ENCODE measurements at regions of chr3 and their contacts with region 1.

Region 1: GRCh38 chr3:169966428-169966950 is at the start of gene SEC62:
- DNase-seq: peak; percentile 89 to 97 (median 94)
- H3K4me3 ChIP-seq: peak within 1 kb of the TSS; percentile 60 to 98 (median 88)
- H3K27ac ChIP-seq: peak within 1 kb of the TSS; percentile 34 to 97 (median 91)
- H3K27me3 ChIP-seq: no peaks in the 10 kb centered on the region
- CTCF ChIP-seq: peak in 54 of 56 donors; percentile 17 to 74 (median 53)
- total RNA-seq, gene SEC62: 130 to 256 (median 198) TPM

Region 2: DNA sequence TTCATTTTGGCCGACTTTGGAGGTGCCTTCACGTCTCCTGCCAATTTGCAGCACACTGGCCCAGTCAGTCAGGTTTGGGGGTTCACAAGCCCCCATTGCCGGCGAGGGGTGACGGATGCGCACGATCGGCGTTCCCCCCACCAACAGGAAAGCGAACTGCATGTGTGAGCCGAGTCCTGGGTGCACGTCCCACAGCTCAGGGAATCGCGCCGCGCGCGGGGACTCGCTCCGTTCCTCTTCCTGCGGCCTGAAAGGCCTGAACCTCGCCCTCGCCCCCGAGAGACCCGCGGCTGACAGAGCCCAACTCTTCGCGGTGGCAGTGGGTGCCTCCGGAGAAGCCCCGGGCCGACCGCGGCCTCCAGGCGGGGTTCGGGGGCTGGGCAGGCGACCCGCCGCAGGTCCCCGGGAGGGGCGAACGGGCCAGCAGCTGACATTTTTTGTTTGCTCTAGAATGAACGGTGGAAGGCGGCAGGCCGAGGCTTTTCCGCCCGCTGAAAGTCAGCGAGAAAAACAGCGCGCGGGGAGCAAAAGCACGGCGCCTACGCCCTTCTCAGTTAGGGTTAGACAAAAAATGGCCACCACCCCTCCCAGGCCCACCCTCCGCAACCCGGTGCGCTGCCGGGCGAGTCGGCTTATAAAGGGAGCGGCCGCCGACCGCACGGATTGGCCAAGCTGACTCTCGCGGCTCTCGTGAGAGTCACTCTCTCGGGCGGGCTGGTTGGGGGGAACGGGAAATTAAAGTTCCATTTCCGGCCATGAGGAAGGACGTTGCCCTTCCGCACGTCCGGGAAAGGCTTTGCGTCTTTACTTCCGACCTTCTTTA is 201.8 kb before region 1 on chr3 and contains the start of gene TERC:
- intact Hi-C with region 1: loop called in 1 of 2 experiments (anchors 5 kb)
- DNase-seq: peak; percentile 81 to 96 (median 91)
- H3K4me3 ChIP-seq: peak within 1 kb of the TSS; percentile 63 to 98 (median 89)
- H3K27ac ChIP-seq: peak within 1 kb of the TSS; percentile 86 to 100 (median 97)
- H3K27me3 ChIP-seq: no peaks in the 10 kb centered on the region
- CTCF ChIP-seq: peak in 14 of 56 donors; percentile 4 to 28 (median 12)
- total RNA-seq, gene TERC: 1.6 to 15.3 (median 4.5) TPM in 78 of 120 experiments, not detected in the others

Region 3: DNA sequence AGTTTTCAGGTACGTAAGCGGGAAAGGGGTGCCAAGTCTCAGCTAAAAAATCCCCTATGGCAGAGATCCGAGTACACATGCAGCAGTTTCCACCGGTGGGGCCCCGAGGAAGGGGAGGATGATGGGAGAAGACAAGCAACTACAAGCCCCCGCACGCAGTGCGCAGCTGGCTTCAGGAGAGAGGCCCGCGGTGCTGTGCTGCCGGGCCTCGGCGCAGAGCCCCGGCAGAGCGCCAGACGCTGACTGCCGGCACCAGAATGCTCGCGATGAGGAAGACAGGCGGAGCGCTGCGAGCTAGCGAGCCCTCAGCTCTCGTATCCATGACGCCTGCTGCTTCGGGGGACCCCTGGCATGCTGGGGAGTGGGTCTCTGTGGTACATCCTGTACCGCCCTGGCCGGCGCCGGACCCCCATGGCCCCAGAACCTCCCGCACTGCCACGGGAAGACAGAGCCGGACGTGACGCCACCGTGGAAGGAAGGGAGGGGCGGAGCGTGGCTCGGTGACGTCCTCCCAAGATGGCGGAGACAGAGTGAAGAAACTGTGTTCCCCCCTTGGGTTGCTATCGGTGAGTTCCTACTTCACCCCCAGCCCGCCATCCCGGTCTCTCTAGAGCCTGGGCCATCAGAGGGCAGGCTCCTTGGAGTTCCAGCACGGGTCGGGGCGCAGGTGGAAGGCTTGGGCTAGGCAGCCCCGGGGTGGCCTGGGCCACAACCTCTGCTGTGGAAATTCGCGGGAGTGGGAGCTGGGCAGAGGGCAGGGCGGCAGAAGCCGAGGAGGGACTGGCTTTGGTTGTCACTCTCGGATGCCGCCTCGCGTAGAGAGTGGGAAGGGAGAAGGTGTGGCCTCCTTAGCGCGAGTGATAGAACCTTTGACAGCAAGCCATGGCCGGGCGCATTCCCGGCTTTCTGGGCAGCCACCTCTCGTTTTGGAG is 193.3 kb before region 1 on chr3 and contains the start of gene MYNN:
- intact Hi-C with region 1: loop called (anchors 2 to 5 kb)
- DNase-seq: peak; percentile 91 to 96 (median 94)
- H3K4me3 ChIP-seq: peak within 1 kb of the TSS; percentile 71 to 100 (median 92)
- H3K27ac ChIP-seq: peak within 1 kb of the TSS; percentile 91 to 100 (median 99)
- H3K27me3 ChIP-seq: no peaks in the 10 kb centered on the region
- CTCF ChIP-seq: peak in 11 of 56 donors; percentile 6 to 27 (median 18)
- total RNA-seq, gene MYNN: 9.5 to 20.4 (median 13.4) TPM

Region 4: GRCh38 chr3:169812332-169813235 is 153.9 kb before region 1 on chr3 and contains the starts of genes LRRC34 and LRRIQ4:
- intact Hi-C with region 1: loop called (anchors 2 to 5 kb)
- DNase-seq: peak; percentile 38 to 86 (median 75)
- H3K4me3 ChIP-seq: peak within 1 kb of the TSS; percentile 52 to 87 (median 73)
- H3K27ac ChIP-seq: peak within 1 kb of the TSS in 57 of 59 donors; percentile 10 to 90 (median 78)
- H3K27me3 ChIP-seq: no peaks in the 10 kb centered on the region
- CTCF ChIP-seq: peak in 1 of 56 donors; percentile 13
- total RNA-seq, gene LRRC34: 4.9 to 20.1 (median 11.4) TPM
- total RNA-seq, gene LRRIQ4: 0.23 to 1.8 (median 0.58) TPM in 100 of 120 experiments, not detected in the others

Region 5: DNA sequence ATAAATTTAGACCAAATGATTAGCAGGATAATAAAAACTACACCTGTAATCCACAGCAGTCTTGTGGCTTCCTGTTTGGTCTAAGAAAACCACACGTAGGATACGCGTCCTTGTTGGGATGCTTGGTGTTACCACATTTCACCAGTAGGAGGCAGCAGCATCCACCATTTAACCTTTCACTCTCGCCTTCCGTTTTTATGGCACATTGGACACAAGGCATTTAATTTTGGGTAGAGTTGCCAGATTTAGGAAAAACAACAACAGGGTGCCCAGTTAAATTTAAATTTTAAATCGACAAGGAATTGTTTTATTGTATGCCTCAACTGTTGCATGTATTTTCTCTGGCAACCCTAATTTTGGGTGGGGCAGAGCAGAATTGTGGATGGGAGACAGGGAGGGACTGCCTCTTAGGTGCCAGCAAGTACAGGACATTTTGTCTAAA is 103.0 kb before region 1 on chr3:
- intact Hi-C with region 1: loop called (anchors 1 to 10 kb)
- DNase-seq: peak in 6 of 10 donors; percentile 19 to 77 (median 68)
- H3K4me3 ChIP-seq: peak overlapping the region in 6 of 59 donors; percentile 1 to 45 (median 14)
- H3K27ac ChIP-seq: no peak overlapping the region
- H3K27me3 ChIP-seq: no peaks in the 10 kb centered on the region
- CTCF ChIP-seq: peak; percentile 81 to 97 (median 94)

Region 6: DNA sequence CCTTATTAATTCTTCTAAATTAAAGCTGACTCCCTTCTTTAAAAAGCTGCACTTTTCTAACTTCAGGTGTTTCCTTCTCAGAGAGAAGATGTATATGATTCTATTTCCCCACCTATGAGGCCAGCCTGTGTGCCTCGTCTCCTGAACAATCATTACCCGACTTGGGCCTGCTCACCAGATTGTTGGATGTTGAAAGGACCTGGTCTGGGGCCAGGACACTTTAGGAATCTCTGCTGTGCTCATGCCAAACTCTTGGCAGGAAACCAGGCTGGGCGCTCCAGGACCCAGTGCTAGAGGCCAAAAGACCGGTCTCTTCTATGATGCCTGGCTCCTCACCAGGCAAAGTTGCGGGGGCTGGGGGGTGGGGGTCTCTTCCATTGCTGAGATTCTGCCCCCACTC is 79.8 kb before region 1 on chr3:
- intact Hi-C with region 1: loop called in 1 of 2 experiments (anchors 2 kb)
- DNase-seq: peak in 8 of 10 donors; percentile 42 to 73 (median 58)
- H3K4me3 ChIP-seq: peak overlapping the region in 15 of 59 donors; percentile 3 to 46 (median 21)
- H3K27ac ChIP-seq: peak overlapping the region in 50 of 59 donors; percentile 7 to 85 (median 66)
- H3K27me3 ChIP-seq: no peaks in the 10 kb centered on the region
- CTCF ChIP-seq: no peak